ENCODE measurements at regions of chr1 and their contacts with region 1.

Region 1: GRCh38 chr1:155001675-155002463 is 733 bp upstream of the ZBTB7B start:
- DNase-seq: peak; percentile 99
- H3K4me3 Mint-ChIP-seq: peak overlapping the region; percentile 99
- H3K27ac Mint-ChIP-seq: peak overlapping the region; percentile 98
- H3K4me1 Mint-ChIP-seq: peaks cover 58% of the 10 kb centered on the region
- H3K27me3 Mint-ChIP-seq: no peaks in the 10 kb centered on the region

Region 2: GRCh38 chr1:154558575-154559465 is 443.0 kb before region 1 on chr1 and contains the start of gene UBE2Q1:
- intact Hi-C with region 1: loop called (anchors 2 kb)
- DNase-seq: peak; percentile 100
- H3K4me3 Mint-ChIP-seq: peak within 1 kb of the TSS; percentile 98
- H3K27ac Mint-ChIP-seq: peak within 1 kb of the TSS; percentile 98
- H3K4me1 Mint-ChIP-seq: peaks cover 38% of the 10 kb centered on the region
- H3K27me3 Mint-ChIP-seq: no peaks in the 10 kb centered on the region
- total RNA-seq, gene UBE2Q1: 86.6 and 104 TPM in 2 replicates

Region 3: GRCh38 chr1:154925335-154926170 is 76.3 kb before region 1 on chr1:
- intact Hi-C with region 1: no loop called
- DNase-seq: no peak
- H3K4me3 Mint-ChIP-seq: no peak overlapping the region
- H3K27ac Mint-ChIP-seq: peak overlapping the region; percentile 67
- H3K4me1 Mint-ChIP-seq: peaks cover 13% of the 10 kb centered on the region
- H3K27me3 Mint-ChIP-seq: no peaks in the 10 kb centered on the region

Region 4: DNA sequence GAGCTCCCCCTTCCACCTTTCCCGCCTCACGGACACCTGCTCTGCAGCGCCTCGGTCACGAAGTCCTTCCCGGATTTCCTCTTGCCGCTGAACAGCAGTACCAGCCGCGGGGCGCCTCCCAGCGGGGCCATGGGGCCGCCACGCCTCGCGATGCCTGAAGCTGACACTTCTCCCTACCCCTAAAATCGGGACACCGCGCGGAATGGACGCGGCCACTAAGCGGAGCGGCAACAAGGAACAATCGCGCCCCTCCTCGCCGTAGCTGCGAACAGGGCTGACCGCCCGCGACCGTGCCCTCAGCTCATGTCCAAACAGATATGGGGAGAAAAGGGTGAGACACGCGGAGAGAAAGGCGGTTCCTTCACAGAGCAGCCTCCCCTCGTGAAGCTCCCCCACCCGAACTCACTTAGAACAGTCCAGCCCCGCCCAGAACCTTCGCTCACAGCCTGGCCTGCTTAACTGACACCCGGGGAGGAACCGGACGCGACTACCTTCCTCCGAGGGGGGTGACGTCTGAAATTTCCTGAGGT is 65.2 kb before region 1 on chr1 and contains the start of gene PMVK:
- intact Hi-C with region 1: loop called (anchors 1 kb)
- DNase-seq: peak; percentile 98
- H3K4me3 Mint-ChIP-seq: peak within 1 kb of the TSS; percentile 91
- H3K27ac Mint-ChIP-seq: peak within 1 kb of the TSS; percentile 91
- H3K4me1 Mint-ChIP-seq: peaks cover 46% of the 10 kb centered on the region
- H3K27me3 Mint-ChIP-seq: no peaks in the 10 kb centered on the region
- total RNA-seq, gene PMVK: 47.4 and 47.7 TPM in 2 replicates

Region 5: DNA sequence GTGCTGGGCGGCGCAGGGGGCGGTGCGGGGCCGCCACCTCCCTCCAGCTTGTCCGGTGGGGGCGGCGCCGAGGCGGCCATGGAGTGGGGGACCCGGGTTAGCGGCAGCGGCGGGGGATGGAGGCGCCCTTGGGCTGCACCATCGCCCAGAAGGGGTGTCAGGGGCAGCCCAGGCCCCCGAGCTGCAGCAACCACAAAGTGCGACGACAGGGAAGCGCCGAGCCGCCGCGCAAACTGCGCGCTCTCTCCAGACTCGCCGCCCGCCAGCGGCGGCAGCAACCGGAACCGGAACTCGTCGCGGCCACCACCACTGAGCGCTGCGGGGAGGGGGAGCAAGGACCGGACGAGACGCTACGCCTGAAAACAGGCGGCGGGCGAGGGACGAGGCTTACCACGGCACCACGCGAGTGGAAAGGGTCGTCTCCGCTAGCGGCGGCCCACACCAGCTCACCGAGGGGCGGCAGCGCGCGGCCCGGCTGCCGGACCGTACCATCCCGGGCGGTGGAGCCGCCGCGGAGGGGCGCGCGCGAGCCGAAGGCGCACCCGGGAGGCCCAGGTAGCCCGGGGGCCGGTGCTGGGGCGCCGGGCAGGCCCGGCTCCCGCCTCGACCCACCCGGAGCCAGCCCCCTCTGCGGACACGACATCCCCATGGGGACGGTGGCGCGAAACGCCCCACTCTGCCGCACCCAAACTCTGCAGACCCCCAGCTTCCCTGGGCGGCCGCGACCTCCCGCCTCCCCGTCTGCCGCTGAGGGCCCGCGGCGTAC is 40.2 kb before region 1 on chr1 and contains the start of gene PYGO2:
- intact Hi-C with region 1: loop called (anchors 1 kb)
- DNase-seq: peak; percentile 96
- H3K4me3 Mint-ChIP-seq: peak within 1 kb of the TSS; percentile 96
- H3K27ac Mint-ChIP-seq: peak within 1 kb of the TSS; percentile 89
- H3K4me1 Mint-ChIP-seq: peaks cover 26% of the 10 kb centered on the region
- H3K27me3 Mint-ChIP-seq: no peaks in the 10 kb centered on the region
- total RNA-seq, gene PYGO2: 34.4 and 34.8 TPM in 2 replicates

Region 6: DNA sequence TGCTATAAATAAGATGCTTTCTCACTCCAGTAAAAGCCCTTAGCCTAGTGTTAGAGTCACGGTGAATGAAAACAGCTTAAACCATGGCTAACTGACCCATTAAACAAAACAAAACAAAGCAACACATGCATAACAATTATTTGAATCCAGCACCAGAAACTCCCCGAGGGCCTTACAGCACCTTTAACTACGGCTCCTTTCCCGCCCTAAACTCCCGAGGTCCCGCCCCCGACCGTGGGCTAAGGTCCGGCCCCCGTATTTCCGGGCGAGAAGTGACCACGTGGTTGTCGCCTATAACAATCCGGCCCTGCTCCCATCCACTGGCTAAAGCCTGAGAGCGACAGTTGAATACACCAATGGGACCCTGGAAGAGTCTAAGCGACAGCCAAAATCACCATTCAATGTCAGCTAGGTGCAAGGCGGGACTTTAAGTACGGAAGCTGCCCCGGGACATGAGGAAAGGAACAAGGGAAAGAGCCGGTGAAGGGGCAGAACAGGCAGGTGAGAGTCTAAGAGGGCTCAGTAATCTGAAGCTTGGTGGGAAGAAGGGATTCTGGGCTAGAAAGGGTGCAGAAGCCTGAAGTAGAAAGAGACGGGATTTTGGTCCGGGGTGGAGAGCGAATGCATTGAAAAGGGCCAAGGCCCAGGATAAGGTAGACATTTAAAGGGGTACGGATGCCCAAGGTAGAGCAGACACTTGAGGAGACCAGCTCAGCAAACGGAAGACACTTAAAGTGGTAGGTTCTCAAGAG is 18.8 kb before region 1 on chr1 and contains the start of gene FLAD1:
- intact Hi-C with region 1: loop called (anchors 1 kb)
- DNase-seq: peak; percentile 99
- H3K4me3 Mint-ChIP-seq: no peak within 1 kb of the TSS
- H3K27ac Mint-ChIP-seq: peak within 1 kb of the TSS; percentile 8
- H3K4me1 Mint-ChIP-seq: peaks cover 11% of the 10 kb centered on the region
- H3K27me3 Mint-ChIP-seq: no peaks in the 10 kb centered on the region
- total RNA-seq, gene FLAD1: 69.9 and 71.8 TPM in 2 replicates

Region 7: GRCh38 chr1:155063550-155064110 is 61.8 kb after region 1 on chr1 and contains the start of gene EFNA4:
- intact Hi-C with region 1: loop called (anchors 5 kb)
- DNase-seq: peak; percentile 96
- H3K4me3 Mint-ChIP-seq: peak within 1 kb of the TSS; percentile 80
- H3K27ac Mint-ChIP-seq: peak within 1 kb of the TSS; percentile 54
- H3K4me1 Mint-ChIP-seq: peaks cover 23% of the 10 kb centered on the region
- H3K27me3 Mint-ChIP-seq: no peaks in the 10 kb centered on the region
- total RNA-seq, gene EFNA4: 5.8 and 6.2 TPM in 2 replicates

Region 8: DNA sequence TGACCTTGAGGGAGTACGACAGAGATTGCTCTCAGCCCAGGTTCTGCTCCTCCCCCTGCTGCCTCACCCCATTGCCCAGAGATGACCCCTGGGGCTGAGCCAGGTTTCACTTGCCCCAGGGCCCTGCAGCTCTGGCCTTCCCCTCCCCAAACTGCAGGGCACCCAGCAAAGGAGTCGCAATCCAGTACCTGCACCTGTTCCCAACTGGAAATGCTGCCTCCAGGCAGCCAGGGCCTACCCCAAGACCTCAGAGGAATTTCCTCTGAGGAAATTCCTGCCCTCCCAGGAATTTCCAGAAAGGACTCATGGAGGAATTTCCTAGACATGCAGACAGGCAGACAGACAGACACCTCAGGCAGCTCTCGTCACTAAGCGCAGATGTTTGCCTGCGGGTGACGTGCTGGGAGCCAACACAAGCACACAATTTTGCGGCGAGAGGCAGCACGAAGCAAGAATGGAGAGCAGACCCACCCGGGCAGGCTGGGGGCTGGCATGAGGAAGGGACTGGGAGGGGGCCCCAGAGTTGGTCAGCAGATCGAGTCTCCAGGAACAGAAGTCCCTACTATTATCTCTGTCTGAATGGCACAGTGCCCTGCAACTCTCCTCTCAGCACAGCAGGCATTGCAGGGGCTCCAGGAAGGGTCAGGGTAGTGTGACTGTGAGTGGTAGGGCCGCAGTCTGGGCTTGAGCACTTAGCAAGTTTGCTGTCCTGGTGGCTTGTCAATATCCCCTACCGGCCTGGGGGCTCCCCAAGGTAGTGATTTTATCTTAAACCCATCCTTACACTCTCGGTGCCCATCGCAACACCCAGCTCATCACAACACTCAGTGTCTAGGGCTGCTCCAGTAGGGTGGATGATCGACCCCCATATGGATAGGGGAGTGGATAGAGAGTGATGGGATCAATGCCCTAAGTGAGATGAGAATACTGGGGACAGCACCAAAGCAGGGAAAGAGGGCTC is 122.9 kb after region 1 on chr1:
- intact Hi-C with region 1: no loop called
- DNase-seq: no peak
- H3K4me3 Mint-ChIP-seq: no peak overlapping the region
- H3K27ac Mint-ChIP-seq: no peak overlapping the region
- H3K4me1 Mint-ChIP-seq: peaks cover 25% of the 10 kb centered on the region
- H3K27me3 Mint-ChIP-seq: peaks cover 57% of the 10 kb centered on the region

Region 9: GRCh38 chr1:155135415-155136028 is 133.7 kb after region 1 on chr1 and contains the start of gene SLC50A1:
- intact Hi-C with region 1: loop called (anchors 5 kb)
- DNase-seq: peak; percentile 98
- H3K4me3 Mint-ChIP-seq: peak within 1 kb of the TSS; percentile 98
- H3K27ac Mint-ChIP-seq: peak within 1 kb of the TSS; percentile 98
- H3K4me1 Mint-ChIP-seq: peaks cover 44% of the 10 kb centered on the region
- H3K27me3 Mint-ChIP-seq: peaks cover 7% of the 10 kb centered on the region
- total RNA-seq, gene SLC50A1: 46.2 and 46.3 TPM in 2 replicates